ENCODE measurements at regions of chr3 and their contacts with region 1.

Region 1: GRCh38 chr3:133040696-133041523 is 2.7 kb downstream of the TMEM108 start:
- DNase-seq: no peak
- H3K4me3 ChIP-seq: no peak overlapping the region
- H3K27me3 ChIP-seq: peaks cover 23% of the 10 kb centered on the region
- CTCF ChIP-seq: peak; percentile 82

Region 2: DNA sequence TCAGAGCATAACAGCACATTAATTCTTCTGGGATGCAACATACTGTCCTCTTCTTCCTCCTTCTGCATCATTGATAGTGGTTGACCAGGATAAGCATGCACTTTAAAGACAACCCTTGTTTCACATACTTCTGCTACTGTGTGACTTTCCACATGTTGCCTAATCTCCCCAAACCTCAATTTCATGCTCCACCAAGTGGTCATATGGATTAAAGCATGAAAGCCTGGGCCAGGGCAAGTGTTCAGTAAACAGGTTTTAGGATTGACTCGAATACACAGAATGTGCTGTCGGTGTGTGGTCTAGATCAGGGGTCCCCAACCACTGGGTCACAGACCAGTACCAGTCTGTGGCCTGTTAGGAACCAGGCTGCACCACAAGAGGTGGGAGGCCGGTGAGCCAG is 336.5 kb after region 1 on chr3:
- CTCF ChIA-PET with region 1: interaction called, 29 read pairs
- POLR2A ChIA-PET with region 1: no interaction called
- DNase-seq: no peak
- H3K4me3 ChIP-seq: no peak overlapping the region
- H3K27me3 ChIP-seq: 0 out of 2 replicates have a peak, but pooled peaks cover 2% of the 10 kb centered on the region
- CTCF ChIP-seq: peak; percentile 62

Region 3: GRCh38 chr3:133384331-133385027 is 343.6 kb after region 1 on chr3:
- CTCF ChIA-PET with region 1: interaction called, 18 read pairs
- POLR2A ChIA-PET with region 1: no interaction called
- DNase-seq: no peak
- H3K4me3 ChIP-seq: no peak overlapping the region
- H3K27me3 ChIP-seq: peaks cover 3% of the 10 kb centered on the region; the same call in 1 of the 2 replicates
- CTCF ChIP-seq: peak; percentile 75

Region 4: DNA sequence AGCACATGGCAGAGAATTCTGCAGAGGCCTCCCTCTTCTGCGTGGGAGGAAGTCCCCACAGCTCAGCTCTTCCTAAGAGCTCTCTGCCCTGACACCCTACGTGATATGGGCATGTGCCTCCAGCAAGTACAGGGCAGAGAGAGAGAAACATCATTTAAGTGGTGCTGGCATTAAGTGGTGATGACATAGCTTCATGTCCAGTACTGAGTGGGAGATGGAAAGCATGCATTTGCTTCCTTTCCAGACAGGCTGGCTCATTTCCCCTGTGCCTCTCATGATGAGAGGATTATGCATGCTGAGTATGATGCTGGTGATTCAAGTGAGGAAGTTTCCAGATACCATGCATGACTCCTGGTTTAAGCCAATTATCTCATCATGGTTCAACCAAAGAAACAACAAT is 385.8 kb after region 1 on chr3:
- CTCF ChIA-PET with region 1: interaction called, 16 read pairs
- POLR2A ChIA-PET with region 1: no interaction called
- DNase-seq: no peak
- H3K4me3 ChIP-seq: no peak overlapping the region
- H3K27me3 ChIP-seq: peaks cover 4% of the 10 kb centered on the region
- CTCF ChIP-seq: no peak

Measured in BJ (cell line).